ENCODE measurements at regions of chr17 and their contacts with region 1.

Region 1: GRCh38 chr17:64390044-64390443 is 616 bp downstream of the PECAM1 start:
- DNase-seq: no peak
- H3K4me3 ChIP-seq: peak overlapping the region; percentile 24 to 74 (median 34)
- H3K4me3 Mint-ChIP-seq: peak overlapping the region; percentile 87 to 92
- H3K27ac ChIP-seq: peak overlapping the region; percentile 90 to 93
- H3K27ac Mint-ChIP-seq: peak overlapping the region; percentile 97 to 100 (median 99)
- H3K4me1 ChIP-seq: peaks cover 79 to 88% of the 10 kb centered on the region in 2 donors
- H3K4me1 Mint-ChIP-seq: peaks cover 89% of the 10 kb centered on the region
- H3K27me3 ChIP-seq: no peaks in the 10 kb centered on the region
- H3K27me3 Mint-ChIP-seq: peaks cover 0 to 3% (median 2%) of the 10 kb centered on the region in 3 donors
- CTCF ChIP-seq: no peak

Region 2: DNA sequence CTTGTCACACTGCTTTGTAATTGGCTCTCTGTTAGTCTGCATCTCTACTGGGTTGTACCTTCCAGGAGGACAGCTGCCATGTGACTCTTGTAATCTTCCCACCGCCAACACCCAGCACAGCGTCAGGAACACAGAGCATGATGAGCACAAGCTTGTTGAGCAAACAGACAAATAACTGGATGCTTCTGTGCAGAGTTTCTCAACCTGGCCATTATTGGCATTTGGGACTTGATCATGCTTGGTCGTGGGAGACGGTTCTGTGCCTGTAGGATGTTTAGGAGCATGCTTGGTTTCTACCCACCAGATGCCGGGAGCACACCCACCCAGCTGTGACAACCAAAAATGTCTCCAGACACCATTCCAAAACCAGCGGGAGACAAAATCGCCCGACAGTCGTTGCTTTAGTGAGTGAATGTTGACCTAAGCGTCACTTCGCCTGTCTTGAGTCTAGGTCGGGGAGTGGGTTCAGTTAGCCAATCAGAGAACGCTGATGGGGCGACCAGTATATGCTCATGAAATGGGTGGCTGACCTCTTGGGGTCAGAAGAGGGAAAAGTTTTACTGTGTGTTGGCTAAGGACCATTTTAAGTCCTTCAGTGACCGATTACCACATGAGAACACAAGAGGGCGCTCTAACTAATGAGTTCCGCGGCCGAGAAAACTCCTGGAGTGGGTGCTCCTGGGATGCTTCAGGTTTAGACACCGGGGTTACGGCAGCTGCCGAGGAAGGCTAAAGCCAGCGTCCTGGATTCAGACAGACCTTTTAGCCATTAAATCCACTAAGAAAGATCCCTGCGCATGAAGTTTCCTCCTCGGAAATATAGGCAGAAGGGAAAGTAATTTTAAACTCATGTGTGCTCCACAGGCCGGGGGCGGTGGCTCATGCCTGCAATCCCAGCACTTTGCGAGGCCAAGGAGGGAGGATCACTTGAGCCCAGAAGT is 69.2 kb before region 1 on chr17:
- intact Hi-C with region 1: no loop called
- DNase-seq: peak; percentile 61 to 83 (median 72)
- H3K4me3 ChIP-seq: no peak overlapping the region
- H3K4me3 Mint-ChIP-seq: peak overlapping the region; percentile 51 to 58
- H3K27ac ChIP-seq: peak overlapping the region in 1 of 2 donors; percentile 52
- H3K27ac Mint-ChIP-seq: peak overlapping the region; percentile 51 to 83 (median 76)
- H3K4me1 ChIP-seq: peaks cover 22 to 59% of the 10 kb centered on the region in 2 donors
- H3K4me1 Mint-ChIP-seq: peaks cover 47% of the 10 kb centered on the region
- H3K27me3 ChIP-seq: no peaks in the 10 kb centered on the region
- H3K27me3 Mint-ChIP-seq: peaks cover 0 to 4% (median 3%) of the 10 kb centered on the region in 3 donors
- CTCF ChIP-seq: peak; percentile 91

Region 3: GRCh38 chr17:64403881-64404460 is 13.9 kb after region 1 on chr17:
- intact Hi-C with region 1: loop called in 1 of 2 experiments (anchors 2 kb)
- DNase-seq: peak in 2 of 3 donors; percentile 58 to 65
- H3K4me3 ChIP-seq: peak overlapping the region in 1 of 3 experiments; percentile 67
- H3K4me3 Mint-ChIP-seq: peak overlapping the region in 1 of 2 donors; percentile 48
- H3K27ac ChIP-seq: peak overlapping the region; percentile 92 to 98
- H3K27ac Mint-ChIP-seq: peak overlapping the region; percentile 92 to 97 (median 96)
- H3K4me1 ChIP-seq: peaks cover 95 to 100% of the 10 kb centered on the region in 2 donors
- H3K4me1 Mint-ChIP-seq: peaks cover 95% of the 10 kb centered on the region
- H3K27me3 ChIP-seq: no peaks in the 10 kb centered on the region
- H3K27me3 Mint-ChIP-seq: no peaks in the 10 kb centered on the region
- CTCF ChIP-seq: no peak

Measured in CD14-positive monocyte (primary cell).